ENCODE measurements at regions of chr4 and their contacts with region 1.

Region 1: DNA sequence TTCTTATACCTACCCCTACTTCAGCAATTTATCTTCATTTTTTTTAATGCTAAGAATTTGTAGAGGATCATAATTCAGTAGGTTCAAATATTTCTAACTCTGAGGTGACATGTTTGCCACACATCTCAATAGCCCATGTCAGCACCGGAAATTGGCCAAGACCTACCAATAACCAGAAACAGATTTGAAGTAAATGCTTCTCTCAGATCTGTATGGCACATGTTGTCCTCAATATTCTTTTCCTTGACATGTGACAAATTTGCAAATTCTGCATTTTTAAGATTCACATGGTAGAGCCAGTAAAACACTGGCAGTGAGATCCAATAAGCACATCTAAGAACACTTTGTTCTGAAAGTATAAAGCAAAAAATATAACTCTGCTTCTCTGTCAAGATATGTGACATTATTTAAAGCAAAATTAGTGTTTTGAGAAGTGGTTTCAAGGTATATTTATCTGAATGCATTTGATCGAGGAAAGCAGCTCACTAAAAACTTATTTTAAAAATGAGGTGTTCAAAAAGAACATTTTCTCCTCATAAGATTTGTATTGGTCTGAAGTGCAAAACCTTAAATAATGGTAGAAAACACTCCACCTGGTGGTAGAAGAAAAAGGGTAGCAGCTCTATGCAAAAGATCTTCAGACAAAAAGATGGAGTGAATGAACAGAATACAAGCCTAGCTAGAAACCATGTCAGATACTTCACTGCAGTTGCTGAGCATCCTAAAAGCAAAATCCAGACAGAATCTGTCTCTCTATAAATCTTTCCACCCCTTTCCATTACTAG is 513.8 kb upstream of the FAM241A start:
- DNase-seq: peak; percentile 36
- ATAC-seq: no peak
- H3K4me3 ChIP-seq: no peak overlapping the region
- H3K27ac ChIP-seq: no peak overlapping the region
- H3K4me1 ChIP-seq: no peaks in the 10 kb centered on the region
- H3K27me3 ChIP-seq: peaks cover 23% of the 10 kb centered on the region
- CTCF ChIP-seq: peak; percentile 57

Region 2: GRCh38 chr4:109998867-109999584 is 1632.4 kb before region 1 on chr4:
- CTCF ChIA-PET with region 1: no interaction called
- POLR2A ChIA-PET with region 1: no interaction called
- intact Hi-C with region 1: loop called (anchors 5 kb)
- DNase-seq: peak; percentile 75
- ATAC-seq: peak; percentile 70
- H3K4me3 ChIP-seq: no peak overlapping the region
- H3K27ac ChIP-seq: no peak overlapping the region
- H3K4me1 ChIP-seq: no peaks in the 10 kb centered on the region
- H3K27me3 ChIP-seq: no peaks in the 10 kb centered on the region
- CTCF ChIP-seq: peak; percentile 71

Region 3: DNA sequence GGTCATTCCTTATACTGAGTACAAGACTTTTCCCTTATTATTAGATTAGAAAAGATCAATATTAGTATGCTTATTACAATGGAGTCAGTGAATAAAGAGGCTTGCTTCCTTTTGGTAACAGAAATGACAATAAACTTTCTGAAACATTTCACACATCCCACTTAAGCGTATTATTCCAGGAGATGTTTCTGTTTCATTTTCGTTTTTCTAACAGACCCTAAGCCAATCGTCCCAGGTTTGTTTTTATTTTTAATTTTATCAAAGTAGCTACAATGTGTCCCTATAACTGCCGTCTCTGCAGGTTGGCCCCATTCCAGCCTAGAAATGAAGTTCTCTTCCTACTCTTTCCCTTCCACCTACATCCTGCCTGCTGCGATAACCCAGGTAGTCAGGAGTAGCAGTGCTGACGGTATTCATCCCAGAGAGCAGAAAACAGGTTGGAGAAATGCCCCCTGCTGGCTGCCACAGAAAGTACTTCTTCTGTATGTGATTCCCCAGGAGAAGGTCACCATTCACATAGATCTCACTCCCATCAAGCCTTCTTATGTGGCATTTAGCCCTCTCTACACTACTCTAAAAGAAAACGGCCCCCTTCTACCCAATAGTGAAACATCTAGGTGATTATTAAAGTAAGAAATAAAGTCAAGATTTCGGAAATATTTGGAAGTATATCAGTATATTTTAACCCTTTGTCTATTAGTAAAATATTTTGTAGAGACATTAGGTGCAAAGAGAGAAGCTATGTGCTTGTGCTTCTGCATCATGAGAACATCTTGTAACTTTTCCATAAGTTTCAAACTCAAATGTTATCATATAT is 1115.1 kb before region 1 on chr4:
- CTCF ChIA-PET with region 1: no interaction called
- POLR2A ChIA-PET with region 1: no interaction called
- intact Hi-C with region 1: loop called (anchors 5 kb)
- DNase-seq: peak; percentile 78
- ATAC-seq: peak; percentile 97
- H3K4me3 ChIP-seq: peak overlapping the region; percentile 76
- H3K27ac ChIP-seq: no peak overlapping the region
- H3K4me1 ChIP-seq: no peaks in the 10 kb centered on the region
- H3K27me3 ChIP-seq: no peaks in the 10 kb centered on the region
- CTCF ChIP-seq: peak; percentile 78

Region 4: DNA sequence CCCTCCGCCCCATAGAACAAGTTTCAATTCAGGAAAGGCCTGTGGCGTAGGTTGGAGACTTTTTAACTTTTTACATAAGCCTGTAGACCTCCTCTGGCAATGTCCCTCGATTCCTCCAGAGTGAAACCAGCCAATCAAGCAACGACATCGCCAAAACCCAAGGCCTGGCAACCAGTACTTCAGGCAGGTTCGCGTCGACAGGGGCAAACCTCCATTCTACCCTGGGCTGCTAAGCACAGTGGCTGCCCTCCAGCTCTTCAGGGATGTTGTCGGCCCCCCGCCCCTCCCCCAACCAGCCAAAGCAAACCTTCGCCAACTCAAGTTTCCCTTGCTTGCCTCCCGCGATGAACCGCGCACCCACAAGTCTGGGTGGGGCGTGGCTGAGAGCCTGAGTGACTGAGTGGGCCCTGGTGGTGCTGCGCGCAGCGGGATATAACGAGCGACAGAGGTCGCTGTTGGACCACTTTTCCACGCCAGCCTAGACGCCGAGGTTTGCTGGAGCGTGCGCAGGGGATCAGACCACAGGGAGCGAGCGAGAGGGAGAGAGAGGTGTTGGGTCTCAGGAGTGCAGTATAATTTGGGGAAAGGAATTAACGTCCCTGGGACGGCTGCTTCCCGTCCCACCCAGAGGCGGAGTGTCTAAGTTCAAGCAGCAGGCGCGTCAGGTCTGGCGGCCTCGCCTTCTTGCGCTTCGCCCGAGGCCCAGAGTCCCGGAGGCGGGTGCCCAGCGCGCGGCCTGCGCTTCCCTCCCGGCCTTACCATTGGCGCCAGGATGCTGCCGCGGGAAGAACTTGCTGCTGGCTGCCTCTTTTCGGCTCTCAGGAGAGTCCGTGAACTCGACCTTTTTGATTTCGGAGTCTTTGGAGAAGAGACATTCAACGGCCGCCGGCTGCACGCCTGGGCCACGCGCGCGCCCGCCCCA is 999.6 kb before region 1 on chr4:
- CTCF ChIA-PET with region 1: no interaction called
- POLR2A ChIA-PET with region 1: no interaction called
- intact Hi-C with region 1: loop called (anchors 2 kb)
- DNase-seq: peak; percentile 80
- ATAC-seq: peak; percentile 99
- H3K4me3 ChIP-seq: peak overlapping the region; percentile 61
- H3K27ac ChIP-seq: no peak overlapping the region
- H3K4me1 ChIP-seq: peaks cover 6% of the 10 kb centered on the region; the same call in 1 of the 2 replicates
- H3K27me3 ChIP-seq: peaks cover 77% of the 10 kb centered on the region
- CTCF ChIP-seq: peak; percentile 85

Region 5: DNA sequence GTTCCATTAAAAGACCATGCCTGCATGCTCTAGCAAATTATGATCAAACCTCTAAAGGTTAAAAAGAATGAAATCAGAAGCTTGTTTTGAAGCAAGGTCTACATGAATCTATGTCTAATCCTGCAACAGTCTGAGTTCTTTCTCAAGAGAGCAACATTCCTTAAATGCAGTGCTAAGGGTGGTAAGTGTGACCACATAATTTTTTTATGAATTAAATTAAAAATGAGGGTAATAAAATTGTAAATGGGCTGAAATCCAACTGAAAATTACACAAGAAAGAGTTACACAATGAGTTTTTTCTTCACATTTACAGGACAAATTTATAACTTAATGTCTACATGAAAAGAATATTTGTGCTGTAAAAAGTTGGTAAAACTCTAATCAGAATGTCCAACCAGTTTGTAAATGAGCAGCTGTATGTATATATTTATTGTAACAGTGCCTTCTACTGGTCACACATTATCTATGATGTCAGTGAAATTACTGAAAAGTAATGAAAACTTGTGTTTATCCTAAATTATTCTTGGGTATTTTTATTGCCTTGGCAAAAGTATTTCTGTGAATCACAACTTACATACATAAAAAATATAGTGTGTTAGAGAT is 672.3 kb before region 1 on chr4:
- CTCF ChIA-PET with region 1: no interaction called
- POLR2A ChIA-PET with region 1: no interaction called
- intact Hi-C with region 1: loop called (anchors 5 kb)
- DNase-seq: no peak
- ATAC-seq: no peak
- H3K4me3 ChIP-seq: no peak overlapping the region
- H3K27ac ChIP-seq: no peak overlapping the region
- H3K4me1 ChIP-seq: no peaks in the 10 kb centered on the region
- H3K27me3 ChIP-seq: peaks cover 56% of the 10 kb centered on the region
- CTCF ChIP-seq: peak; percentile 59; the same call in 1 of the 2 replicates

Region 6: DNA sequence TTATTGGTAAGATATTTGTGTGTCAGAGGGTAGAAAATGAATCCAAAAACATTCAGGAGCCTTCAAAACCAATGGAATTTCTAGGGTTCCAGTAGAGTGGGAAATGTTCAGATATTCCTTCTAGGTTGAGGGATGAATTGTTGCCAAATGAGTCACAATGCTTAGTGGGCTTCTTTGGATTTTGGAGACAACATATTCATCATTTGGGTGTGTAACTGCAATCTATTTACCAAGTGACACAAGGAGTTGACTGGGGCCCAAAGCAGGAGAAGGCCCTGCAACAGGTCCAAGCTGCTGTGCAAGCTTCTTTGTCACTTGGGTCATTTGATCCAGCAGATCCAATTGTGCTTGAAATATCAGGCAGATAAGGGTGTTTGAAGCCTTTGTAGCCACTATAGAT is 457.1 kb before region 1 on chr4:
- CTCF ChIA-PET with region 1: no interaction called
- POLR2A ChIA-PET with region 1: no interaction called
- intact Hi-C with region 1: no loop called
- DNase-seq: peak; percentile 6
- ATAC-seq: no peak
- H3K4me3 ChIP-seq: no peak overlapping the region
- H3K27ac ChIP-seq: no peak overlapping the region
- H3K4me1 ChIP-seq: no peaks in the 10 kb centered on the region
- H3K27me3 ChIP-seq: no peaks in the 10 kb centered on the region
- CTCF ChIP-seq: no peak

Region 7: DNA sequence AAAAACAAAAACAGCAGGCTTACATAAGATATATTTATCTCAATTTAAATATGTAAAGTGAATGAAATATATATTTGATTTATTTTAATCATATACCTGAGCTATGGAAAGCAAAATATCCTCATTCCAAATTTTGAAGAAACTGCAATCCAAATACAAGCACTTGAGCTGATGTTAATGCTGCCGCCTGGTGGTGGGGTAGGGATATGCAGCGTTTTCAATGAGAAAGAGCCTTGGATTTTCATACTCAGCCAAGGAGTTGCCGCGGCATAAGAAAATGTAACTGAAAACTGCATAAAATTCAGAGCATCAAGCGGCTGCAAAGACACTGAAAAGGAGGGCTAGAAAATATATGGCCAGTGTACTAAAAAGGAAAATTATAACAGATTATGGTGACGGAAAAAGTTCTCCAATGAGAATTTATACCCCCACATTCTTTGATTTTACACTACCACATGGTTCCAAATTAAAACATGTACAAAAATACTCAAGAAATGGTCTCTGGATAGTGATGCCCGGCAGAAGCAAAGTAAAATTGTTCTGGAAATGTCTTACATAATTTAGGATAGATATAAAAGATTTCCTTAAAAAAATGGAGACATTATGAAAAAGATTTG is 348.2 kb before region 1 on chr4:
- CTCF ChIA-PET with region 1: no interaction called
- POLR2A ChIA-PET with region 1: no interaction called
- intact Hi-C with region 1: loop called (anchors 5 kb)
- DNase-seq: peak; percentile 68
- ATAC-seq: no peak
- H3K4me3 ChIP-seq: no peak overlapping the region
- H3K27ac ChIP-seq: no peak overlapping the region
- H3K4me1 ChIP-seq: no peaks in the 10 kb centered on the region
- H3K27me3 ChIP-seq: 0 out of 2 replicates have a peak, but pooled peaks cover 4% of the 10 kb centered on the region
- CTCF ChIP-seq: peak; percentile 71

Region 8: DNA sequence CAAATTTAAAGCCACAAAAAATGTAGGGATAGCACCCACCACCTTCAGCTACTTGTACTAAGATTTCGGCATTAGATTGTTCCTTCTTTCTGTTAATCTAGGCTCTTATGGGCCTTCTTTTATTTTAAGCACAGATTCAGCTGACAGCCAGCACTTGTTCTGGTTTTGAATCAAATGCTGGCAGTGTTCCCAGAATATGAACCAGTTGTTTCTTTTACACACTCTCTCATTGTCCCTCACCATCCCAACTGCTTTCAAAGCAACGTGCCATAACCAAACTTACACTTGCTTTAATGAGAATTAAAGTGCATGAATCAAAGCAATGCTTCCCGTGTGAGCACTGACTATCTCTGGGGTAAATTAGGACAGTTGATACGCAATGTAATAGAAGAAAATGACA is 230.7 kb before region 1 on chr4:
- CTCF ChIA-PET with region 1: no interaction called
- POLR2A ChIA-PET with region 1: no interaction called
- intact Hi-C with region 1: no loop called
- DNase-seq: peak; percentile 12
- ATAC-seq: 0 out of 2 replicates have a peak, but pooled peaks have one; percentile 31
- H3K4me3 ChIP-seq: no peak overlapping the region
- H3K27ac ChIP-seq: no peak overlapping the region
- H3K4me1 ChIP-seq: no peaks in the 10 kb centered on the region
- H3K27me3 ChIP-seq: no peaks in the 10 kb centered on the region
- CTCF ChIP-seq: no peak

Region 9: GRCh38 chr4:111475001-111475400 is 156.4 kb before region 1 on chr4:
- CTCF ChIA-PET with region 1: no interaction called
- POLR2A ChIA-PET with region 1: no interaction called
- intact Hi-C with region 1: loop called (anchors 1 kb)
- DNase-seq: peak; percentile 52
- ATAC-seq: peak; percentile 30; the same call in 1 of the 2 replicates
- H3K4me3 ChIP-seq: no peak overlapping the region
- H3K27ac ChIP-seq: 0 out of 2 replicates have a peak overlapping the region, but pooled peaks have one; percentile 32
- H3K4me1 ChIP-seq: peaks cover 6% of the 10 kb centered on the region; the same call in 1 of the 2 replicates
- H3K27me3 ChIP-seq: no peaks in the 10 kb centered on the region
- CTCF ChIP-seq: peak; percentile 60

Measured in PC-3 (cell line).